Left ventricle myocardium superior (tissue), 1 donor: ENCODE measurements at regions of chr5 and their contacts with region 1.

Region 1: DNA sequence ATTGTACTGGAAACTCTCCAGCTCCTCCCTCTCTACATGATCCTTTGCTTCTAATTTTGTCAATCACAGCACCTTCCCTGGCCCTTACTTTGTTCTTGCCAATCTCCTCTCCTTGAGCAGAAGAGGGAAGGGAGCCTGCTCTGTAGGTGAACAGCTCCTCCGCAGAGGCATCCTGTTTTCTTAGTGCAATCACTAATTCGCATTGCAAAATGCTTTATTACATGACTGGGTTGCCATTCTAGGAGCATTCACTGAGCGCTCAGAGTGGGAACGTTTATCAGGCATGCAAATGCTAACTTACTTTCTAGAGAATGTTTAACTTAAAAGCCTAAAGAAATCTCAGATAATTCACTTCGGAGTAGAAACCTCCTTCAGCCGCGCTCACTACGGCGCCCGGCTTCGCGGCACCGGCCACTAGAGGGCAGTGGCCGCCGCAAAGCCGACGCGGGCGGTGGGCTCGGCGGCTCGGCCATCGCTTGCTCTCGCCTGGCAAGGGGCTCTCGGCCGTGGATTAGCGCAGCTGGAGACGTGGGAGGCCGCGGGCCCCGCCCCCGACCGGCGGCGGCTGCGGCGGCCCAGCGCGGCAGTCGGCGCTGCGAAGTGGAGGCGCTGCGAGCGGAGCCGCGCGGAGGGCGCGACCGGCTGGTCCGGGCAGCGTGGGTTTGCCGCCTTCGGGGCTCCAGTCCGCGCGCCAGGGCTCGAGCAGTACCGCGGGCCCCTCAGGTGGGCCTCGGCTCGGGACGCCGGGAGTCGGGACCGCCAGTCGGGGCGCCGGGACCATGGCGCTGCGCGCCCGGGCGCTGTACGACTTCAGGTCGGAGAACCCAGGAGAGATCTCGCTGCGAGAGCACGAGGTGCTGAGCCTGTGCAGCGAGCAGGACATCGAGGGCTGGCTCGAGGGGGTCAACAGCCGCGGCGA is at the start of gene SNX18:
- DNase-seq: peak; percentile 96
- ATAC-seq: peak; percentile 93
- total RNA-seq, gene SNX18: 20.9 TPM

Region 2: DNA sequence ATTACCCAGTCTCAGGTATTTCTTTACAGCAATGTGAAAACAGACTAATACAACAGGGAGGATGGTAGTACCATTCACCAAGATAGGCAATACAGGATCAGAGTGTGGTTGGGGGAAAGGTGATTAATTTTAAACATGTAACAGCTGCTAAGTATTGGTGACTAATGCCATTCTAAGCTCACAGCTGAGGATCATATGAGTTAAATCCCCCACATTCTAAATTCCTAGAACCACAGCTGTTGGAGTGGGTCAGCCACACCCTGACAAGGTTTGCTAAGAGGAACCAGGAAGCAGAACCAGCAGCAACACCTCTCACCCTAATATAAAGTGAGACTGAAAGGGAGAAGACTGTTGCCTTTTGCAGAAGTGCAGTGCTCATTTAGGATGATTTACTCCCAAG is 37.1 kb before region 1 on chr5:
- intact Hi-C with region 1: no loop called
- DNase-seq: no peak
- ATAC-seq: no peak

Region 3: GRCh38 chr5:54619731-54620547 is 102.5 kb after region 1 on chr5:
- intact Hi-C with region 1: no loop called
- DNase-seq: no peak
- ATAC-seq: no peak

Region 4: GRCh38 chr5:54651482-54652076 is 134.1 kb after region 1 on chr5:
- intact Hi-C with region 1: loop called (anchors 10 kb)
- DNase-seq: peak; percentile 88
- ATAC-seq: peak; percentile 59

Region 5: DNA sequence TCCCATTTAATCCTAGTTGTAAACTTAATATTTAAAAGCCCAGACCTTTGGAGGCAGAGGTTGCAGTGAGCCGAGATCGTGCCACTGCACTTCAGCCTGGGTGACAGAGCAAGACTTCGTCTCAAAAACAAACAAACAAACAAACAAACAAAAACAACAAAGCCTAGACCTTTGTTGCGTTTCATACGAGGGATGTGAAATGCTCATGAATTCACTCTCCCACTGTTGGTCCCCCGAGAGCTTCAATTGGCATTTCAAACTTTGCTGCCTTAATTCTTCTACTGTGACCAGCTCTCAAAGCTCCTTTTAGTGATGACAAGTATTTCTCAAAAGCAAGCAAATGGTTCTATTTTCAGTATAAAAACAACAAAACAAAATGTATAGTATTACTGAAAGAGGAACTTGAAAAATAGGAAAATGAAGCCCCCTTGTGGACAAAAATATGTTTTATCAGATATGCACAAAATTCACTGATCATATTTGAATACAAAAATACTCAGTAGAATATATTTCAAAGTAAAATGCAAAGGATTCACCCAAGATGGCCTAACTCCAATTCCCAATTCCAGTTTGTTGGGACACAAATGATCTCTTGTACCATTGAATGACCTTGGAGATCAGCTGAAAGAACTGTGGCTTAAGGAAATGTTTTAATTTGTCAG is 327.6 kb after region 1 on chr5:
- intact Hi-C with region 1: loop called (anchors 1 kb)
- DNase-seq: no peak
- ATAC-seq: peak; percentile 41